Activated CD4-positive, alpha-beta memory T cell treated with anti-CD3 and anti-CD28 coated beads for 36 hours (primary cell): ENCODE measurements at regions of chr16 and their contacts with region 1.

Region 1: GRCh38 chr16:67521095-67521804 is 7.4 kb upstream of the RIPOR1 start:
- DNase-seq: peak; percentile 99
- H3K4me3 Mint-ChIP-seq: peak overlapping the region; percentile 82
- H3K27ac Mint-ChIP-seq: peak overlapping the region; percentile 95
- H3K4me1 Mint-ChIP-seq: peaks cover 8% of the 10 kb centered on the region
- H3K27me3 Mint-ChIP-seq: no peaks in the 10 kb centered on the region

Region 2: DNA sequence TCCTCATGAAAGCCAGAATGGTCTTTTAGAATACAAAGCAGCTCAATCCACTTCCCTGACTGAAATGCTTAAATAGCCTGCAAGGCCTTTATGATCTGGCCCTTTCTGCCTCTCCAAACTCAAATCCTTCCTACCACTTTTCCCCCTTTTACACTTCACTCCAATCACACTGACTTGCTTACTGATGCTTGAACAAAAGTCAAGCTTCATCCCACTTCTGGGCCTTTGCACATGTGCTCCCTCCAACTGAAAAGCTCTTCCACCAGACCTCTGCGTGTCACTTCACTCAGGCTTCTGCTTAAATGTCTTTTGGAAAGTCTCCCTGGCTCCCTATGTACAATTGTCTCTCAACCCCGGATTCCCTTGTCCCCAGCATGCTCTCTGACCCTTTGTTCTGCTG is 706.5 kb before region 1 on chr16:
- CTCF ChIA-PET with region 1: no interaction called
- POLR2A ChIA-PET with region 1: no interaction called
- intact Hi-C with region 1: no loop called
- DNase-seq: no peak
- H3K4me3 Mint-ChIP-seq: no peak overlapping the region
- H3K27ac Mint-ChIP-seq: no peak overlapping the region
- H3K4me1 Mint-ChIP-seq: no peaks in the 10 kb centered on the region
- H3K27me3 Mint-ChIP-seq: no peaks in the 10 kb centered on the region

Region 3: DNA sequence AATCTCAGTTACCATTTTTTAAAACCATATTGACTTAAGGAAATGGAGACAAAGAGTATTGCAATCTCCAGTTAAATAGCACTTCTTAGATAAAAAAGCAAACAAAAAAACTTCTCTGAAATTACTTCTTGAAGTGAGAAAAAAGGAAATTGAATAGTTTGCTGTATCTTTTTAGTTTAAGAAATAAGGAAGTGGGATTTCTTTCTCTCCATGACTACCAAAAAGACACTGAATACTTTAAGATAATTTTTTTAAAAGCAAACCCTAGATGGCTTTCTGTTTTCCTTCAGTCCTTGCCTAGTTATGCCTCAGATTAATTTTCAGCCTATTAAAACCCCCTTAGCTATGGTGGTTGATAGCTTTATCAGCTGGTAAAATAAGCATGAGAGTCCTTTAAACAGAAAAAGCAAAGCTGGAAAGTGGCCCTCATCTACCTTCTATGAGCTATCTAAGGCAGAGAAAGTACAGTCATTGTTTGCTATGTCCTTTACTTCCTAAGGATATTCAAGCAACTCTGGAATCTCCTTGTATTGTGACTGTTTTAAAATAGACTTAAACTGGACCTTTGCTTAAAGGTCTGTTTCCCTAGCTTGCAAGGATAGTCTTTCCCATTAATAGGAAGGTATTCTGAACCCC is 156.5 kb before region 1 on chr16:
- CTCF ChIA-PET with region 1: no interaction called
- POLR2A ChIA-PET with region 1: no interaction called
- intact Hi-C with region 1: no loop called
- DNase-seq: no peak
- H3K4me3 Mint-ChIP-seq: no peak overlapping the region
- H3K27ac Mint-ChIP-seq: no peak overlapping the region
- H3K4me1 Mint-ChIP-seq: peaks cover 7% of the 10 kb centered on the region
- H3K27me3 Mint-ChIP-seq: peaks cover 3% of the 10 kb centered on the region

Region 4: DNA sequence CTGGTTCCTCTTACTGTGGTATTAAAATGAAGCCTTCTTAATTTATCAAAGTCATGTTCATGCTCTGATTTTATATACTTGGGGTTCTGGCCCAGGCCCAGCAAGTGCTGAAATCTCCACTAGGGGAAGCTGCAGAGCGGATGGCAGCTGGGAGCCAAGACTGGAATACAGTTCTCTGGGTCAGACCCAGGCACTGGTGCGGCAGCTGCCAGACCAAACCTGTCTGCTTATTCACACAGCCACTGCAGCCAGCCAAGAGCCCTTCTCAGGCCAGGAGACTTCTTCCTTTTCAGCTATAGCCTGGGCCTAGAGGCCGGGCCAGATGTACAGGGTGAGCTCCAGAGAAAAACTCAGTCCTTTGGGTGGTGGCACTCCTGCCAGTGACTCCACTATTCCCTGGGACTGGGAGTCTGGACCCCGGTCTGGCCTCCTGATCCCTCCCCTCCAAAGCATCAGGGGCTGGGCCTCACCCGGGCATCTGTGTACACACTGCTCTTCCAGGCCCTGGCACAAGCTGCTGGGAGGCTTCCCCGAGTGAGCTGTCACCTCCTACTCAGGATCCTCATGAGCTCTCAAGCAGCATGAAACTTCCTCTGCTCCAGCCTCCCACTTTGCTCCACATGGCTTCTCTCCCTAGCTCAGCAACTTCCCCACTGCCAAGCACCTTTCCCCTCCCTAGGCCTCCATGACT is 64.7 kb before region 1 on chr16:
- CTCF ChIA-PET with region 1: no interaction called
- POLR2A ChIA-PET with region 1: no interaction called
- intact Hi-C with region 1: no loop called
- DNase-seq: no peak
- H3K4me3 Mint-ChIP-seq: no peak overlapping the region
- H3K27ac Mint-ChIP-seq: no peak overlapping the region
- H3K4me1 Mint-ChIP-seq: peaks cover 7% of the 10 kb centered on the region
- H3K27me3 Mint-ChIP-seq: no peaks in the 10 kb centered on the region

Region 5: DNA sequence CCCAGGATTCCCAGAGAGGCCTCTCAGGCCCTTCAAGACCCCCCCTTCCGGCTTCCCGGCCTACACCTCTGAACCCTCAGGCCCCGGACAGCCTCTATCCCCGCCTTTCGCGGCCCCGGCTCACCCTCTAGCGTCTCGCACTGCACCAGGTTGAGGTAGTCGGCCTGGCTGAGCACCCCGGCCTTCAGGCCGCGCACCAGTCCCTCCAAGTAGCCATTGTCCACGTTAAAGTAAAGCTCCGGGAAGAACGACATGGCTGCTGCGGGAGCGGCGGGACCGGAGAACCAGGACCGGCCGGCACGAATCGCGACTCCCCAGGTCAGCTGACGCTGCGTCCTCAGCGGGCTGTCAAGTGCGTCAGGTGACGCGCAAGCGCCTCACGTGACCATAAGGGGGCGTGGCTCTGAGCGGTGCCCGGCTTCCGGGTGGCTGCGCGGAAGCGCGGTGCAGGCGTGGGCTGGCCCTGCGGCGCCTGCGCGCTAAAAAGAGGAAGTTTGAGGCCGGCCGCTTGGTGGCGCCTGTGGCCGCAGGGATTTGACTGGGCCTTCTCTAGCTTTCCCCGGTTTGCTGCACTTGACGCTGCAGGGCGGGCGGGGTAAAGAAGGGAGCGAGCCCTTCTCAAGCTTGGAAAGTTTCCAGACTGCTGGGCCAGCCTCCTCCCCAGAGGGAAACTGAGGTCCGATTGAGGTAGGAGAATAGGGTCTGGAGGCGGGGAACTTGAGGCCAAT is 40.3 kb before region 1 on chr16 and contains the start of gene ATP6V0D1:
- CTCF ChIA-PET with region 1: interaction called, 58 read pairs
- POLR2A ChIA-PET with region 1: interaction called, 6 read pairs
- intact Hi-C with region 1: loop called (anchors 2 kb)
- DNase-seq: peak; percentile 99
- H3K4me3 Mint-ChIP-seq: peak within 1 kb of the TSS; percentile 99
- H3K27ac Mint-ChIP-seq: peak within 1 kb of the TSS; percentile 97
- H3K4me1 Mint-ChIP-seq: peaks cover 43% of the 10 kb centered on the region
- H3K27me3 Mint-ChIP-seq: no peaks in the 10 kb centered on the region
- total RNA-seq, gene ATP6V0D1: 25.0 to 26.3 TPM

Region 6: DNA sequence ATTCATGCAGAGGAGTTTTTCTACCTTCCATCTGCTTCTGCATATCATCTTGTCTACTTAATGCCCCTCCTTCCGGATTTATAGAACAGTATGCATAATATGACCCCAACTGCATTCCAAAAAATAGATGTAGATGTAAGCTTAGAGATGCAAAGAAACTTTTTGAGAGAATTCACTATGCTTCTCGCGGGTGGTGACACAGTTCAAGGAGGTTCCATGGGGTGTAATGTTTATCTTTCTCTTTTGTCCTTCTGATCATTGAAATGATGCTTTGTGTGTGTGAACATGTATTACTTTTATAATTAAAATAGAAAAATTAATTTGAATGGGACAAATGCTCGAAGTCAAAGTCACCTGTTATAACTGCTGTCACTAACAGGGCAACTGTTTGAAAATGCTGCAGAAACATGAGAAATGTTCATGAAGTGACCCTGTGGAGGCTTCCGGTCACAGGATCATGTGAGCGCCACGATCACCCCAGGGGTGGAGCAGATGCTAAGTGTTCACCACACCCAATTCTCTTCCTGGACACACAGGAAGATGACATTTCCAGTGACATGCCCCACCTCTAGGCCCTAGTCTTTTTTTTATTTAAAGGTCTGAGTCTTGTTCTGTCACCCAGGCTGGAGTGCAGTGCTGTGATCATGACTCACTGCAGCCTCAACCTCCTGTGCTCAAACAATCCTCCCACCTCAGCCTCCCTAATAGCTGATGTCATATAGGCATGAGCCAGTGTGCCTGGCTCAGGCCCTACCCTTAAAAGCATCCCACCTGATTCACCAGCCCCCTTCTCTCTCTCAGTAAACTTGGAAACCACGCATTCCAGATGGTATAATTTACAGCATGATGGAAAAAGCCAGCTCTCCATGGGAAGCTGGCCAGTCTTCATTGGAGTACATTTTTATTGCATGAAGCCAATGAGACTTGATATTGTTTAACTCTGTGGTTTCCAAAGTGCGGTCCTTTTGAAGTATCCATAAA is 16.9 kb before region 1 on chr16:
- CTCF ChIA-PET with region 1: interaction called, 128 read pairs
- POLR2A ChIA-PET with region 1: no interaction called
- intact Hi-C with region 1: loop called (anchors 1 kb)
- DNase-seq: peak; percentile 76
- H3K4me3 Mint-ChIP-seq: no peak overlapping the region
- H3K27ac Mint-ChIP-seq: peak overlapping the region; percentile 82
- H3K4me1 Mint-ChIP-seq: peaks cover 42% of the 10 kb centered on the region
- H3K27me3 Mint-ChIP-seq: no peaks in the 10 kb centered on the region

Region 7: DNA sequence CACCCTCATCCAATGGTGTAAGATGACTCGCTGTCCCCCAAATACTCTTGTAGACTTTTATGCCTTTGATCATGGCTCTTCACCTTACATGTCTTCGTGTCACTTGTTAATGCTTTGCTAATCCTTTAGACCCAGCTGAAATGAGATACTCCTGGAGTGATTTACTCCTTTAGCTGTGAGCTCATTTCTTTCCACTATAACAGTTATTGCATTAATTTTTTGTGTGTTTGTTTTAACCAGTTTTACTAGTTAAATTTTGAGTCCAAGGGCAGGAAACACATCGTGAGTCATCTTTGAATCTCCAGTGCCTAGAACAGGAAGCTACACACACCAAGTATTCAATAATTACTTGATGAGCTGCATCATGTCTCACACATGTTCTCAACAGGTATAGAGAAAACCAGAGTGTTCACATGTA is 34.6 kb after region 1 on chr16:
- CTCF ChIA-PET with region 1: interaction called, 51 read pairs
- POLR2A ChIA-PET with region 1: interaction called, 3 read pairs
- intact Hi-C with region 1: no loop called
- DNase-seq: no peak
- H3K4me3 Mint-ChIP-seq: peak overlapping the region; percentile 59
- H3K27ac Mint-ChIP-seq: peak overlapping the region; percentile 99
- H3K4me1 Mint-ChIP-seq: peaks cover 54% of the 10 kb centered on the region
- H3K27me3 Mint-ChIP-seq: no peaks in the 10 kb centered on the region

Region 8: GRCh38 chr16:67632415-67633172 is 111.3 kb after region 1 on chr16:
- CTCF ChIA-PET with region 1: interaction called, 16 read pairs
- POLR2A ChIA-PET with region 1: no interaction called
- intact Hi-C with region 1: no loop called
- DNase-seq: no peak
- H3K4me3 Mint-ChIP-seq: no peak overlapping the region
- H3K27ac Mint-ChIP-seq: no peak overlapping the region
- H3K4me1 Mint-ChIP-seq: no peaks in the 10 kb centered on the region
- H3K27me3 Mint-ChIP-seq: no peaks in the 10 kb centered on the region

Region 9: GRCh38 chr16:67667817-67668494 is 146.7 kb after region 1 on chr16:
- CTCF ChIA-PET with region 1: interaction called, 91 read pairs
- POLR2A ChIA-PET with region 1: interaction called, 4 read pairs
- intact Hi-C with region 1: loop called (anchors 1 kb)
- DNase-seq: peak; percentile 90
- H3K4me3 Mint-ChIP-seq: peak overlapping the region; percentile 82
- H3K27ac Mint-ChIP-seq: no peak overlapping the region
- H3K4me1 Mint-ChIP-seq: peaks cover 15% of the 10 kb centered on the region
- H3K27me3 Mint-ChIP-seq: no peaks in the 10 kb centered on the region

Region 10: DNA sequence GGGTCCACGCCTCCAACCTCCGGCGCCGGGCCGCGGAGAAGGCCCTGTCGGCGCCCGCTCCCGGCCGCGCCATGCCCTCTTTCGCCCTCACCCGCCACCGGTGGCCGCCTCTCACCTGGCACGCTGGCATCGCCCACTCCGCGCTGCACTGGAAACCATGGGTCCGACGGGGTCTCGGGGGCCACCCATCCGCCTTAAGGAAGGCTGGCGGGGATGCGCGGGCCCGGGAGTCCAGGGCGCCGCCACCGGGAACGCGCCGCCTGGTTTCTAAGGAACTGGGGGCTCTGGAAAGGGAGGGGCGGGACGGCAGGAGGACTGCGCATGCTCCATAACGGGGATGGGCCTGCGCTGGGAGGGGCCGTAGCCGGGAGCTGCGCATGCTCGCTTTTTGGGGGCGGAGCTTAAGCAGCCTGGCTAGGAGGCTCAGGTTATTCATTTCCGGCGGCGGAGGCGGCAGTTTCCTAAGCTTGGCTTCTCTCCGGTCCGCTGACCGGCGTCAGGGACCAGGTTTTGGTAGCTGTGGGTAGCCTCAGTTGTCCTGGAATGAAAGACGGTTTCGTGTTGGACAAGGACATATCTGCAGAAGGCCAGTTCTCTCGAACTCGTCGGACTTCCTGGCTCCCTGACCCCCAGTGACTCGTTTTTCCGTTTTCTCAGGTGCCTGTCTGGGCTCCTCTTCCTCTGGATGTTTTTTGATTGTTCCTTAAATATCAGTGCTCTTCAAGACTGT is 198.0 kb after region 1 on chr16 and contains the start of gene GFOD2:
- CTCF ChIA-PET with region 1: interaction called, 12 read pairs
- POLR2A ChIA-PET with region 1: no interaction called
- intact Hi-C with region 1: no loop called
- DNase-seq: peak; percentile 99
- H3K4me3 Mint-ChIP-seq: peak within 1 kb of the TSS; percentile 94
- H3K27ac Mint-ChIP-seq: peak within 1 kb of the TSS; percentile 96
- H3K4me1 Mint-ChIP-seq: peaks cover 35% of the 10 kb centered on the region
- H3K27me3 Mint-ChIP-seq: no peaks in the 10 kb centered on the region
- total RNA-seq, gene GFOD2: 12.6 to 13.7 TPM

Region 11: GRCh38 chr16:67917852-67918236 is 396.6 kb after region 1 on chr16:
- CTCF ChIA-PET with region 1: no interaction called
- POLR2A ChIA-PET with region 1: no interaction called
- intact Hi-C with region 1: no loop called
- DNase-seq: peak; percentile 75
- H3K4me3 Mint-ChIP-seq: no peak overlapping the region
- H3K27ac Mint-ChIP-seq: peak overlapping the region; percentile 77
- H3K4me1 Mint-ChIP-seq: peaks cover 31% of the 10 kb centered on the region
- H3K27me3 Mint-ChIP-seq: no peaks in the 10 kb centered on the region